ENCODE measurements at regions of chr12 and their contacts with region 1.

Region 1: GRCh38 chr12:108731105-108731865 is at the start of gene CORO1C:
- DNase-seq: peak; percentile 99
- H3K4me3 ChIP-seq: peak within 1 kb of the TSS; percentile 57 to 91 (median 76)
- H3K27ac ChIP-seq: peak within 1 kb of the TSS; percentile 92
- H3K4me1 ChIP-seq: peaks cover 29% of the 10 kb centered on the region
- H3K27me3 ChIP-seq: no peaks in the 10 kb centered on the region
- CTCF ChIP-seq: peak; percentile 89 to 95
- POLR2A ChIP-seq: peak; percentile 93
- total RNA-seq, gene CORO1C: 212 and 240 TPM in 2 replicates

Region 2: GRCh38 chr12:108768591-108769500 is 37.6 kb after region 1 on chr12:
- CTCF ChIA-PET with region 1: no interaction called
- POLR2A ChIA-PET with region 1: no interaction called
- dilution Hi-C with region 1: no loop called
- intact Hi-C with region 1: loop called (anchors 2 kb)
- DNase-seq: no peak
- H3K4me3 ChIP-seq: peak overlapping the region in 1 of 3 experiments; percentile 2
- H3K27ac ChIP-seq: no peak overlapping the region
- H3K4me1 ChIP-seq: no peaks in the 10 kb centered on the region
- H3K27me3 ChIP-seq: no peaks in the 10 kb centered on the region
- CTCF ChIP-seq: no peak
- POLR2A ChIP-seq: no peak

Region 3: GRCh38 chr12:108786450-108786849 is 55.2 kb after region 1 on chr12:
- CTCF ChIA-PET with region 1: no interaction called
- POLR2A ChIA-PET with region 1: no interaction called
- dilution Hi-C with region 1: no loop called
- intact Hi-C with region 1: no loop called
- DNase-seq: no peak
- H3K4me3 ChIP-seq: no peak overlapping the region
- H3K27ac ChIP-seq: no peak overlapping the region
- H3K4me1 ChIP-seq: no peaks in the 10 kb centered on the region
- H3K27me3 ChIP-seq: no peaks in the 10 kb centered on the region
- CTCF ChIP-seq: no peak
- POLR2A ChIP-seq: no peak

Region 4: GRCh38 chr12:108896366-108897216 is 165.3 kb after region 1 on chr12:
- CTCF ChIA-PET with region 1: no interaction called
- POLR2A ChIA-PET with region 1: no interaction called
- dilution Hi-C with region 1: no loop called
- intact Hi-C with region 1: no loop called
- DNase-seq: peak; percentile 25
- H3K4me3 ChIP-seq: no peak overlapping the region
- H3K27ac ChIP-seq: no peak overlapping the region
- H3K4me1 ChIP-seq: no peaks in the 10 kb centered on the region
- H3K27me3 ChIP-seq: no peaks in the 10 kb centered on the region
- CTCF ChIP-seq: no peak
- POLR2A ChIP-seq: no peak